Calu3 (cell line): ENCODE measurements at regions of chr2 and their contacts with region 1.

Region 1: GRCh38 chr2:131673392-131674173 is 145.9 kb downstream of the CCDC74A start:
- DNase-seq: peak; percentile 89
- H3K4me3 Mint-ChIP-seq: peak overlapping the region; percentile 65
- H3K27ac Mint-ChIP-seq: no peak overlapping the region
- H3K4me1 Mint-ChIP-seq: no peaks in the 10 kb centered on the region
- H3K27me3 Mint-ChIP-seq: no peaks in the 10 kb centered on the region
- CTCF ChIP-seq: peak; percentile 86

Region 2: DNA sequence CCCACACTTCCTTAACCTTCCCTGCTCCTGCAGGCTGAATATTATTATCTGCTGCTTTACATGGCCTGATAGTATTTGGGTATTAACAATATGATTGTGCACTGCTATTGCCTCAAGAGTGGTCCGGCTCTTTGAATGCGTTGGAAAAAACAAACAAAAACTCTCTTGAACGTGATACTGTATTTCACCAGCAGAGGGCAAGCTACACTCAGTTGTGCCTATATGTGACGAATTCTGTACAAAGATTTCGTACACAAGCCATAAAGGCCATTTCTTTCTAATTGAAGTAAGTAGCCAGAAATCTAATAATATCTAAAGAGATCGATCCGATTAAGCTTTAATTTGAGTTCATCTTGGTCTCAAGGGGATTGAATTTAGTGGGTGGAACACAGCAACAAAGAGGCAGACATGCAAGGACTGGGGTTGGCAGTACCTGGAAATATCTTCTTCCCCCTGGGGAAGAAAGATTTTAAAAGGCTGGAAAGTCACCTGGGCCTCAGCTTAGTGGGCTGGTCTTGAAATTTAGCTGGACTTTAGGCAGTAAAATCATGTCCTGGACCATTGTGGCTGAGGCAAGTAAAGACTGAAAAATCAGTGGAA is 260.3 kb before region 1 on chr2:
- CTCF ChIA-PET with region 1: interaction called, 20 read pairs
- intact Hi-C with region 1: loop called (anchors 1 kb)
- DNase-seq: peak; percentile 37
- H3K4me3 Mint-ChIP-seq: no peak overlapping the region
- H3K27ac Mint-ChIP-seq: no peak overlapping the region
- H3K4me1 Mint-ChIP-seq: no peaks in the 10 kb centered on the region
- H3K27me3 Mint-ChIP-seq: peaks cover 72% of the 10 kb centered on the region
- CTCF ChIP-seq: peak; percentile 57

Region 3: DNA sequence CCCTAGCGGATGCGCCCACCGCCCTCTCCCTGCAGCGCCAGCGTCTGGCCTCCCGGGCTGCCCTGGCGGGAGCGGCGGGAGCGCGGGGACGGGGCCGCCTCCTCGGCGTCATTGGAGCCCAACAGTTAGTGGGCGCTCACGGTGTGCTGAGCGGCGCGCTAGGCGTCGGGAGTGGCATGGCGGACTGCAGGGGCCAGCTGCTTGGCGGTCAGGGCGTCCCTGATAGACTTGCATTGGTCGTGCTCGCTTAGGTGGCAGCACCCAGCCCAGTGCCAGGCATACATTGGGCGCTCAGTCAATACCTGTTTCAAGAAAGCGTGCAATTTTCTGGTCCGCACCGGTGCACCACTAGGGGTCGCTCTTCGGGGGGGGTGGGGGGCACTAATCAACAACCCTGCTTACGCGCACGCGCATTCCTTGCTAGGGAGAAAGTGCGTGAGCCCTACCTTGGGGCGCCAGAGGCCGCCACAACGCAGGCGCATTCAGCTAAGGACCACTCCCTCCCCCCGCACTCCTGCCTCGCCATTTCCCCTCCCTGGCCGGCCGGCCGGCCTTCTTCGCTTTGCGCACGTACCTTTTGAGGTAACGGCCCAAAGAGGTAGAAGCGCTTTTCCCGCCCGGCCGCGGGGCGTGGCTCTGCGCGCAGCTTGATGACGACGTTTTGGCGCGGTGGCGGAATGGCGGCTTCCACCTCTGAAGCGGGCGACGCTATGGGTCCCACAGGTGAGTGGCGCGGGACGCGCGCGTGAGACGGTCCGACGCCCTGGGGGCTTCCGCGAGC is 181.0 kb before region 1 on chr2:
- CTCF ChIA-PET with region 1: interaction called, 11 read pairs
- intact Hi-C with region 1: loop called (anchors 2 kb)
- DNase-seq: peak; percentile 95
- H3K4me3 Mint-ChIP-seq: peak overlapping the region; percentile 95
- H3K27ac Mint-ChIP-seq: peak overlapping the region; percentile 94
- H3K4me1 Mint-ChIP-seq: peaks cover 17% of the 10 kb centered on the region
- H3K27me3 Mint-ChIP-seq: no peaks in the 10 kb centered on the region
- CTCF ChIP-seq: peak; percentile 80

Region 4: GRCh38 chr2:131584940-131585339 is 88.6 kb before region 1 on chr2:
- CTCF ChIA-PET with region 1: no interaction called
- intact Hi-C with region 1: no loop called
- DNase-seq: no peak
- H3K4me3 Mint-ChIP-seq: no peak overlapping the region
- H3K27ac Mint-ChIP-seq: no peak overlapping the region
- H3K4me1 Mint-ChIP-seq: no peaks in the 10 kb centered on the region
- H3K27me3 Mint-ChIP-seq: peaks cover 72% of the 10 kb centered on the region
- CTCF ChIP-seq: no peak

Region 5: DNA sequence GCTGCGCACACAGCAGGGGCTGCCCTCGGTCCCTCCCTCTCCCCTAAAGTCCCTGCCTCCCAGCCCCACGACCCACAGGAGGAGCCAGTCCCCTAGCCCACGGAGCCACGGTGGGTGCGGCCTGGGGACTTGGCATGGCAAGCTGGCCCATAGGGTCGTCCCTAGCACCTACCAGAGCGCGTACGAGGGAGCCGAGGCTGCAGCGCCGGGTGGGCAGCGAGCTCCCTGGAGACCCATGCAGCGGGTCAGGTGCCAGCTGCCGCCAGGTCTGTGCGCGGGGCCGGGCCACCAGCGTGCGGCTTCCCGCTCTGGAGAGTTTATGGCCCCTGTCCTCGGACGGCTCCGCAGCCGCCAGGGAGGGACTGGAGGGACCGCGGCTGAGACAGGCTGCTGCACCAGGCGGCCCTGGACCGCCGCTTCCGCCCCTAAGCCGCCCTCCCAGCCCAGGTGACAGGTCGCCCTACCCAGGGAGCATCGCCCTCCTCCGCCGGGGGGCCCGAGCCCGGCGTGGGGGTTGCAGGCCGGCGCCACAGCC is 127.7 kb after region 1 on chr2:
- CTCF ChIA-PET with region 1: interaction called, 7 read pairs
- intact Hi-C with region 1: loop called (anchors 1 kb)
- DNase-seq: no peak
- H3K4me3 Mint-ChIP-seq: no peak overlapping the region
- H3K27ac Mint-ChIP-seq: no peak overlapping the region
- H3K4me1 Mint-ChIP-seq: no peaks in the 10 kb centered on the region
- H3K27me3 Mint-ChIP-seq: no peaks in the 10 kb centered on the region
- CTCF ChIP-seq: no peak